IMR-90 (cell line): ENCODE measurements at regions of chr5 and their contacts with region 1.

Region 1: DNA sequence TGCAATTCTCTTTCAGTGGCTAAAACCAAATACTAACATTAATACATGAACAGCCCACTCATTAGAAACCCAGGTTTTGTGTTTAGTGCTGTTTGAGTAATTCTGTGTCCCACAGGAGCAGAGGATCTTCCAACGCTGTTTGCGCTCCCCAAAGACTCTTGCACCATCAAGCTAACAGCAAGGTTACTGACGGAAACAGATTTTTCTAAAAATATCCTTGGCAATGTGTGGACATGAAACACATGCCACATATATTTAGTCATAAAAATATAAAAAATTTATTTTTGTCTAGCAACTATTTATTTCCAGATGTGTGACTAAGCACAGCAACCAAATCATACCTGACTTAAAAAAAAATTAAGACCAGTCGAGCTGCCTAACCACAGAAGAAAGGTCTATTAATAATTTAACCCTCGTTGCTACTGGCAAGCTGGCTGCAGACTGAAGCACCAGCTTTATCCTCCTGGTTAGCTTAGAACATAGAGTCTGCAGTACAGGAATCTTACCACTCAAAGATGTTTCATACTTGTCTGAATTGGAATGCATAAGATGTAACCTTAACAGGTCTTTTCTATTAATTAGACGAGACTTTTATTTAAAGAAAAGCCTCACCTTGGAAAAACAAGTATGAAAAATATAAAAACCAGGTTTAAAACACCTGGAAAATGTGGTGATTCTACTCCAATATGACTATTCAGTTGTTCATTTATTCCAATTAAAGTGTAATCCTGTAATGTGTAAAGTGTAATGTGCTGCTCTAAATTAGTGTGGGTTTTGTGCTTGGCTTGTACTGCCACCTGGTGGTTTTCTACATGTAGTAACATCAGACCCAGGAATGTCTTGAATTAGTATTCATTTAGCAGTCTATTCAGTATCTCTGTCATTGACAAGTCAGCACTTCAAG is 272.5 kb downstream of the EPB41L4A start:
- DNase-seq: peak; percentile 93
- ATAC-seq: peak; percentile 96
- H3K4me3 ChIP-seq: no peak overlapping the region
- H3K27ac ChIP-seq: peak overlapping the region; percentile 68; the same call in 1 of the 2 replicates
- H3K4me1 ChIP-seq: peaks cover 3% of the 10 kb centered on the region; the same call in 1 of the 2 replicates
- H3K27me3 ChIP-seq: no peaks in the 10 kb centered on the region
- CTCF ChIP-seq: peak; percentile 87
- POLR2A ChIP-seq: no peak
- RAD21 ChIP-seq: peak; percentile 96

Region 2: GRCh38 chr5:111223889-111224563 is 922.5 kb before region 1 on chr5 and contains the start of gene CAMK4:
- CTCF ChIA-PET with region 1: no interaction called
- POLR2A ChIA-PET with region 1: no interaction called
- dilution Hi-C with region 1: no loop called
- in situ Hi-C with region 1: no loop called
- intact Hi-C with region 1: loop called (anchors 5 kb)
- DNase-seq: peak; percentile 73
- ATAC-seq: peak; percentile 97
- H3K4me3 ChIP-seq: peak within 1 kb of the TSS; percentile 86
- H3K27ac ChIP-seq: peak within 1 kb of the TSS; percentile 9; the same call in 1 of the 2 replicates
- H3K4me1 ChIP-seq: no peaks in the 10 kb centered on the region; the same call in 1 of the 2 replicates
- H3K27me3 ChIP-seq: no peaks in the 10 kb centered on the region
- CTCF ChIP-seq: peak; percentile 22; the same call in 1 of the 2 replicates
- POLR2A ChIP-seq: no peak
- RAD21 ChIP-seq: no peak
- total RNA-seq, gene CAMK4: 4.8 and 6.7 TPM in 2 replicates

Region 3: GRCh38 chr5:111641533-111642230 is 504.9 kb before region 1 on chr5:
- CTCF ChIA-PET with region 1: no interaction called
- POLR2A ChIA-PET with region 1: no interaction called
- dilution Hi-C with region 1: no loop called
- in situ Hi-C with region 1: no loop called
- intact Hi-C with region 1: loop called (anchors 2 kb)
- DNase-seq: peak; percentile 90
- ATAC-seq: peak; percentile 98
- H3K4me3 ChIP-seq: no peak overlapping the region
- H3K27ac ChIP-seq: no peak overlapping the region
- H3K4me1 ChIP-seq: peaks cover 1% of the 10 kb centered on the region; the same call in 1 of the 2 replicates
- H3K27me3 ChIP-seq: peaks cover 29% of the 10 kb centered on the region
- CTCF ChIP-seq: no peak
- POLR2A ChIP-seq: no peak
- RAD21 ChIP-seq: no peak

Region 4: DNA sequence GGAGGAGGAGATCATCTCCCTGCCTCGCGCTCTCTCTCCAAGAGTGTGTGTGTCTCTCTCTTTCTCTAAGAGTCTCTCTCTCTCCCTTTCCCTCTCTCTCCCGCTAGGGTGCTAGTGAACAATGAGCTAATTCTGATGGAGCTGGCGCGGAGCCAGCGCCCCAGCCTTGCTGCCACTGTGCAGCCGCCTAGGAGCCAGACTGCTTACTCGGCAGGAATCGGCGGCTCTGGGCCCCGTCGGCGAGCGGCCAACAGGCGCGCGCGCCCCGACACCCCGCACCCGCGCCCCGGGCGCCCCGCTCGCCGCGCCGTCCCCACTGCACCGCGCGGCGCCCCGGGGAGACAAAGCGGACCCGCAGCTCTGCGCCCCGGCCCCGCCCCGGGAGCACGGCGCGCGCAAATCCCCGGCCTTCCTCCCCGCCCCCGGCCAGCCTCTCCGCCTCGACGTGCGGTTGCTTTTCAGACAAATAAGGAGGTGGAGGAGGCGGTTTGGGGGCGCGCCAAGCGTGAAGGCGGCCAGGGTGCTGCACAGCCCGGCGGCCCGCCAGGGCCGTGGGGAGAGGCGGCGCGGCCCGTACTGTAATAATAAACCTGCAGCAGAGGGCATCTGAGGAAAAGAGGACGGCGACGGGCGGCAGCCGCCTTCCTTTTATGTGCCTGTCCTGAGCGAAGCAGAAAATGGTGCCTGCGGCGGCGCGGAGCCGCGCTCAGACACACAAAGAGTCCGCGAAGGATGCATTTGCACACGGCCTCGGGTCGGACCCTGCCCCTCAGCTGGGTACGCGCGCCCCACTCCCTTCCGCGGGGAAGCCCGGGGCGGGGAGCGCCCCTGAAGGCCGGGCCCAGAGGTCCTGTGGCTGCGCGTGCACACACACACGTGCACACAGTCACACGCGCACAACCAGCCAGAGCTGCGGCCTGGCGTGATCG is 389.0 kb before region 1 on chr5:
- CTCF ChIA-PET with region 1: interaction called, 3 read pairs
- POLR2A ChIA-PET with region 1: no interaction called
- dilution Hi-C with region 1: no loop called
- in situ Hi-C with region 1: loop called (anchors 10 kb)
- intact Hi-C with region 1: loop called (anchors 1 kb)
- DNase-seq: peak; percentile 97
- ATAC-seq: peak; percentile 90
- H3K4me3 ChIP-seq: peak overlapping the region; percentile 95
- H3K27ac ChIP-seq: peak overlapping the region; percentile 93
- H3K4me1 ChIP-seq: peaks cover 4% of the 10 kb centered on the region
- H3K27me3 ChIP-seq: no peaks in the 10 kb centered on the region
- CTCF ChIP-seq: peak; percentile 59
- POLR2A ChIP-seq: peak; percentile 77
- RAD21 ChIP-seq: peak; percentile 57

Region 5: GRCh38 chr5:111859533-111860270 is 286.9 kb before region 1 on chr5:
- CTCF ChIA-PET with region 1: no interaction called
- POLR2A ChIA-PET with region 1: no interaction called
- dilution Hi-C with region 1: no loop called
- in situ Hi-C with region 1: no loop called
- intact Hi-C with region 1: loop called (anchors 5 kb)
- DNase-seq: peak; percentile 91
- ATAC-seq: peak; percentile 46; the same call in 1 of the 2 replicates
- H3K4me3 ChIP-seq: no peak overlapping the region
- H3K27ac ChIP-seq: no peak overlapping the region
- H3K4me1 ChIP-seq: peaks cover 8% of the 10 kb centered on the region
- H3K27me3 ChIP-seq: no peaks in the 10 kb centered on the region
- CTCF ChIP-seq: no peak
- POLR2A ChIP-seq: no peak
- RAD21 ChIP-seq: no peak